ENCODE measurements at regions of chr16 and their contacts with region 1.

Region 1: DNA sequence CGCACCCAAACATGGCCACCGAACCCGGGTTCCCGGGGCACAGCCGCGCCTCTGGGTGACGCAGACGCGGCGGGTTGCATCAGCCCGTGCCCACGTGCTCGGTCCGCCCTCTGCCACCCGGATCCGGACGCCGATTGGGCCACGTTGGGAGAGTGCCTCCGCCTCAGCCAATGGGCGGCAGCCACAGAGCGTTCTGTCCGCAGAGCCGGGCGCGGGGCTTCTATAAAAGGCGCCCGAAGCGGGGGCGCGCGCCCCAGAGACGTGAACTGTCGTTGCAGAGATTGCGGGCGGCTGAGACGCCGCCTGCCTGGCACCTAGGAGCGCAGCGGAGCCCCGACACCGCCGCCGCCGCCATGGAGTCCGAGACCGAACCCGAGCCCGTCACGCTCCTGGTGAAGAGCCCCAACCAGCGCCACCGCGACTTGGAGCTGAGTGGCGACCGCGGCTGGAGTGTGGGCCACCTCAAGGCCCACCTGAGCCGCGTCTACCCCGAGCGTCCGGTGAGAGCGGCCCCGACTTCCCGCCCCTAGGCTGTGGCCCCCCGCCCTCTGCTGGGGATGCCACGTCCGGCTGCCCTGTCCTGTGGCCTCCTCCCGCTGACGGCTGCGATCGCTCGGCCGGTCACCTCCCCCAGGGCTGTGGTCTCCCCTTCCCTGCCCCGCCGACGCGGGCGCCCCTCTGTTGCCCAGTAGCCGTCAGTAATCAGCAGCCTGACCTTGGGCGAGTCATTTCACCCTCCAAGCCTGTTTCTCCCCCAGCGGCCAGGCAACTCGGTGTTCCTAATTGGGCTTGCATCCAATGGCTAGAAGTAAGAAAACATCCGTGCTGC is at the start of gene HERPUD1:
- DNase-seq: peak; percentile 98
- ATAC-seq: peak; percentile 79
- H3K4me3 Mint-ChIP-seq: peak within 1 kb of the TSS; percentile 97
- H3K27ac Mint-ChIP-seq: peak within 1 kb of the TSS; percentile 95
- H3K4me1 Mint-ChIP-seq: peaks cover 61% of the 10 kb centered on the region
- H3K27me3 Mint-ChIP-seq: no peaks in the 10 kb centered on the region
- CTCF ChIP-seq: no peak
- total RNA-seq, gene HERPUD1: 766 and 820 TPM in 2 replicates

Region 2: GRCh38 chr16:56637814-56638750 is 294.0 kb before region 1 on chr16 and contains the start of gene MT1A:
- CTCF ChIA-PET with region 1: no interaction called
- POLR2A ChIA-PET with region 1: no interaction called
- intact Hi-C with region 1: loop called (anchors 10 kb)
- DNase-seq: no peak
- ATAC-seq: no peak
- H3K4me3 Mint-ChIP-seq: peak within 1 kb of the TSS; percentile 41
- H3K27ac Mint-ChIP-seq: no peak within 1 kb of the TSS
- H3K4me1 Mint-ChIP-seq: peaks cover 20% of the 10 kb centered on the region
- H3K27me3 Mint-ChIP-seq: peaks cover 72% of the 10 kb centered on the region
- CTCF ChIP-seq: no peak
- total RNA-seq, gene MT1A: not detected in 2 replicates

Region 3: DNA sequence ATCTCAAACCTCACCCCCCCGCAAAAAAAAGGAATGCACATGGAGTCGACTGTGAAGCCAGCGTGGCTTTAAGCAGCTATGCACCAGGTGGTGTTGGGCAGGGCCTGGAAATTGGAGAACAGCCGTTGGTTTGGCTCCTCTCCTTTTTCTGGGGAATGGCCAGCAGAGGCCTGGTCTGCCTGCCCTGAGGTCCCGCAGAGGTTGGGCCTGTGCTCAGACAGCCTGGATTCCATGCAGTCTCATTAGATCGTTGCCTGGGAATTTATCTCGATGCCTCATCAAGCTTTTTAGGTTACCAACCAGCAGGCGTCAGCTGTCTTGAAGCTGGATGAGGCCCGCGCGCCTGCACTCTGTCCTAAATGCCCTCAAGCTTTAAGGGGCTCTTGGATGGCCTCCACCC is 57.3 kb before region 1 on chr16:
- CTCF ChIA-PET with region 1: interaction called, 57 read pairs
- POLR2A ChIA-PET with region 1: interaction called, 444 read pairs
- intact Hi-C with region 1: no loop called
- DNase-seq: no peak
- ATAC-seq: no peak
- H3K4me3 Mint-ChIP-seq: no peak overlapping the region
- H3K27ac Mint-ChIP-seq: peak overlapping the region; percentile 37
- H3K4me1 Mint-ChIP-seq: peaks cover 39% of the 10 kb centered on the region
- H3K27me3 Mint-ChIP-seq: no peaks in the 10 kb centered on the region
- CTCF ChIP-seq: no peak

Region 4: DNA sequence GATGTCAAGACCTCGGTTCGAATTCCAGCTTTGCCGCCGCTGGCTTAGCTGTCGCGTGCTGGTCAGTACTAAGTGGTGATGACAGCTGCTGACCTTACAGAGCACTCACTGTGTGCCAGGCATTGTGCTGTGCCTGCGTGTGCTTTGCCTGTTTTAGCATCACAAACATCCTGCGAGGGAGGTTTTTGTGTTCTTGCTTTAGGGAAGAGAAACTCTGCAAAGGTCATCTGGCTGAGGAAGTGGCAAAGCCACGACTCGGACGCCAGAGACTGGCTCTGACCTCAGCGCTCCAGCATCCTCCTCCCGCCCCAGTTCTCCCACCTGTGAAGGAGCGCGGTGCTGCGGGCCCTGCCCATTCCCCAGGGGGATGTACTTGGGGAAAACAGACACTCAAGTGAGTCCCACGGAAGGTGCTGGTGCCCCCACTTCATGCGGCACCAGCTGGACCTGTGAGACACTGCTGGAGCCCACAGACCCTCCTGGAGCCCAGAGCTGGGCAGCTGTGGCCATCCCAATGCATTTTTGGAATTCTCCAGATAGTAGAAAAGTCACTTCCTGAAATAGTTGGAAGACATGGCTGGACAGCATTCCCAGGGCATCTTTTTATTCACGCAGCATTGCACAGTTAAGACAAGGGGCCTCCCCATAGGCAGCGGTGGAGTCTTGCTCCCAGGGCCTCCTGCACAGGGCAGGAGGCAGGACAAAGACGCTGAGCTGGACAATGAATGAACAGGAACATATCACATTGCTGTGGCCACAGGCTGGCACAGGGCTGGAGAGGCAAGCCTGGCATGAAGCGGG is 20.1 kb before region 1 on chr16:
- CTCF ChIA-PET with region 1: interaction called, 6 read pairs
- POLR2A ChIA-PET with region 1: interaction called, 795 read pairs
- intact Hi-C with region 1: loop called (anchors 1 kb)
- DNase-seq: peak; percentile 70
- ATAC-seq: peak; percentile 81
- H3K4me3 Mint-ChIP-seq: peak overlapping the region; percentile 64
- H3K27ac Mint-ChIP-seq: peak overlapping the region; percentile 96
- H3K4me1 Mint-ChIP-seq: peaks cover 79% of the 10 kb centered on the region
- H3K27me3 Mint-ChIP-seq: no peaks in the 10 kb centered on the region
- CTCF ChIP-seq: no peak

Region 5: DNA sequence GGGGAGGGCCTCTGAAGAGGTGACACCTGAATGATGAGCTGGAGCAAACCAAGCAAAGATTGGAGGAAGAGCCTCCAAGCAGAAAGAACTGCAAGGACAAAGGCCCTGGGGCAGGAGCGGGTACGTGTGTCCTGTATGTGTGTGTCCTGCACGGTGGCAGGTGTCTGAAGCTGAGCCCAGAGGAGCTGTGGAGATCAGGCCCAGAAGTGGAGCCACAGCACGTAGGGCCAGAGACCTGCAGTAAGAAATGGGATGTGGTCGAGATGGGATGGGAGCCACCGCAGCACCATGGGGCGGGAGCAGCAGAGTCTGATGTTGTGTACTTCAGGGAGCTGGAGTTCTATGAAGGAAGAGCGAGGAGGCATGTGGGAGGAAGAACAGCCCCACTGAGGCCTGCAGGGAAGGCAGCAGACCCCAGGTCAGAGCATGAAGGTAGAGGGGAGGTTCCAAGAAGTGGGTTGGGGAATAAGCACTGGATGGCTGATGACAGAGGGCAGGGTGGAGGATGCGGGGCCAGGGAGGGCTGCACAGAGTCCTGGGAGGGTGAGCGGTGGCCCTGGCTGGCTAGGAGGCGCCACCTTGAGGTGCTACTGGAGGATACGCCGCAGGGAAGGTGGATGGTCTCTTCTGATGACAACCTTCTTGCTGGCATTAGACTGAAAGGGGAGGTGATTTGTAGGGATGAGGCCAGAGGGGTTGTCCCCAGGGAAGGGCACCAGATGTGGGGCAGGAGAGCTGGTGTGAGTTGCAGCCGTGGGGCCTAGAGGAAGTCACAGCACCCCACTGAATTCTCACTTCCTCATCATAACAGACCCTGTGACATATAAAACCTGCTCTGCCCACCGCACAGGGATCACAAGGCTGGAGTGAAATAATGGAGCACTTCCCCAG is 19.0 kb after region 1 on chr16:
- CTCF ChIA-PET with region 1: interaction called, 5 read pairs
- POLR2A ChIA-PET with region 1: interaction called, 795 read pairs
- intact Hi-C with region 1: loop called (anchors 1 kb)
- DNase-seq: peak; percentile 68
- ATAC-seq: peak; percentile 90
- H3K4me3 Mint-ChIP-seq: peak overlapping the region; percentile 60
- H3K27ac Mint-ChIP-seq: peak overlapping the region; percentile 74
- H3K4me1 Mint-ChIP-seq: peaks cover 48% of the 10 kb centered on the region
- H3K27me3 Mint-ChIP-seq: no peaks in the 10 kb centered on the region
- CTCF ChIP-seq: no peak

Region 6: GRCh38 chr16:57535680-57536305 is 603.7 kb after region 1 on chr16:
- CTCF ChIA-PET with region 1: no interaction called
- POLR2A ChIA-PET with region 1: interaction called, 3 read pairs
- intact Hi-C with region 1: loop called (anchors 5 kb)
- DNase-seq: peak; percentile 87
- ATAC-seq: peak; percentile 70
- H3K4me3 Mint-ChIP-seq: peak overlapping the region; percentile 85
- H3K27ac Mint-ChIP-seq: peak overlapping the region; percentile 89
- H3K4me1 Mint-ChIP-seq: peaks cover 83% of the 10 kb centered on the region
- H3K27me3 Mint-ChIP-seq: no peaks in the 10 kb centered on the region
- CTCF ChIP-seq: no peak